Vagina (tissue), 2 donors: ENCODE measurements at regions of chr16 and their contacts with region 1.

Region 1: GRCh38 chr16:82621796-82622195 is 5.0 kb upstream of the CDH13 start:
- DNase-seq: no peak
- H3K4me3 ChIP-seq: no peak overlapping the region
- H3K27ac ChIP-seq: no peak overlapping the region
- H3K4me1 ChIP-seq: peaks cover 5% of the 10 kb centered on the region
- H3K27me3 ChIP-seq: no peaks in the 10 kb centered on the region
- CTCF ChIP-seq: no peak
- POLR2A ChIP-seq: no peak

Region 2: GRCh38 chr16:82634955-82635610 is 13.3 kb after region 1 on chr16:
- intact Hi-C with region 1: loop called (anchors 1 kb)
- DNase-seq: no peak
- H3K4me3 ChIP-seq: no peak overlapping the region
- H3K27ac ChIP-seq: peak overlapping the region; percentile 3
- H3K4me1 ChIP-seq: peaks cover 60% of the 10 kb centered on the region
- H3K27me3 ChIP-seq: no peaks in the 10 kb centered on the region
- CTCF ChIP-seq: no peak
- POLR2A ChIP-seq: no peak

Region 3: GRCh38 chr16:82671741-82672140 is 49.9 kb after region 1 on chr16:
- intact Hi-C with region 1: no loop called
- DNase-seq: no peak
- H3K4me3 ChIP-seq: no peak overlapping the region
- H3K27ac ChIP-seq: no peak overlapping the region
- H3K4me1 ChIP-seq: no peaks in the 10 kb centered on the region
- H3K27me3 ChIP-seq: no peaks in the 10 kb centered on the region
- CTCF ChIP-seq: no peak
- POLR2A ChIP-seq: no peak

Region 4: GRCh38 chr16:84138824-84139627 is 1517.2 kb after region 1 on chr16:
- intact Hi-C with region 1: no loop called
- DNase-seq: no peak
- H3K4me3 ChIP-seq: no peak overlapping the region
- H3K27ac ChIP-seq: no peak overlapping the region
- H3K4me1 ChIP-seq: peaks cover 20% of the 10 kb centered on the region
- H3K27me3 ChIP-seq: no peaks in the 10 kb centered on the region
- CTCF ChIP-seq: no peak
- POLR2A ChIP-seq: no peak